ENCODE measurements at regions of chr1 and their contacts with region 1.

Region 1: DNA sequence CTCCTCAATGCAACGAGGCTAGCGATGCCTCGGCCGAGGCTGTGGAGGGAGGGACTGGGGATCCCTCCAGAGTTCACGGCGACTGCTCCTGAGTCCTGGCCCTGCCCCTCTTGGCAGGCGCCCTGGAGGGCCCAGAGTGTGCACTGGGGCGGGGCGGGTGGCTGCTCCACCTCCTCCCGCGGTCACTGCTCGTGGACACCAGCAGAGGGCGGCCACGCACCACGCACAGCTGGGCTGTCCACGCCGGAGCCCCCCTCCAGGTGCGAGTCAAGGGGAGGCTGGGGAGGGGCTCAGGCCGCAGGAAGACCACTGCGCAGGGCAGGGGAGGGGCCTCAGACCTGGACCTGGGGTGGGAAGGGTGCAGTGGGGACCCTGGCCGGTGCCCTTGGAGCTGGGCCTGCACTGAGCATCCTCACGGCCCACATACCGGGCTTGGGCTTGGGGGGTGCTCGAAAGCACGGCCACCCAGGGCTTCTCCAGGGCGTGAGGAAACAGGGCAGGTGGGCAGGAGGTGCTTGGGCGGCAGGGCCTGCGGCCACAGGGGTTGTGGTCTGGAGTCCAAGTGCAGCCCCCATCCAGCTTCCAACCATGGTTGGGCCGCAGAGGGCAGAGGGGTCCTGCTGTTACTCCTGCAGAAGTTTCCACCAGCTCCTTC is 20.6 kb upstream of the TTC34 start:
- DNase-seq: peak; percentile 22
- H3K4me3 ChIP-seq: no peak overlapping the region
- H3K27ac ChIP-seq: no peak overlapping the region
- H3K4me1 ChIP-seq: no peaks in the 10 kb centered on the region
- H3K27me3 ChIP-seq: no peaks in the 10 kb centered on the region
- CTCF ChIP-seq: peak; percentile 66

Region 2: DNA sequence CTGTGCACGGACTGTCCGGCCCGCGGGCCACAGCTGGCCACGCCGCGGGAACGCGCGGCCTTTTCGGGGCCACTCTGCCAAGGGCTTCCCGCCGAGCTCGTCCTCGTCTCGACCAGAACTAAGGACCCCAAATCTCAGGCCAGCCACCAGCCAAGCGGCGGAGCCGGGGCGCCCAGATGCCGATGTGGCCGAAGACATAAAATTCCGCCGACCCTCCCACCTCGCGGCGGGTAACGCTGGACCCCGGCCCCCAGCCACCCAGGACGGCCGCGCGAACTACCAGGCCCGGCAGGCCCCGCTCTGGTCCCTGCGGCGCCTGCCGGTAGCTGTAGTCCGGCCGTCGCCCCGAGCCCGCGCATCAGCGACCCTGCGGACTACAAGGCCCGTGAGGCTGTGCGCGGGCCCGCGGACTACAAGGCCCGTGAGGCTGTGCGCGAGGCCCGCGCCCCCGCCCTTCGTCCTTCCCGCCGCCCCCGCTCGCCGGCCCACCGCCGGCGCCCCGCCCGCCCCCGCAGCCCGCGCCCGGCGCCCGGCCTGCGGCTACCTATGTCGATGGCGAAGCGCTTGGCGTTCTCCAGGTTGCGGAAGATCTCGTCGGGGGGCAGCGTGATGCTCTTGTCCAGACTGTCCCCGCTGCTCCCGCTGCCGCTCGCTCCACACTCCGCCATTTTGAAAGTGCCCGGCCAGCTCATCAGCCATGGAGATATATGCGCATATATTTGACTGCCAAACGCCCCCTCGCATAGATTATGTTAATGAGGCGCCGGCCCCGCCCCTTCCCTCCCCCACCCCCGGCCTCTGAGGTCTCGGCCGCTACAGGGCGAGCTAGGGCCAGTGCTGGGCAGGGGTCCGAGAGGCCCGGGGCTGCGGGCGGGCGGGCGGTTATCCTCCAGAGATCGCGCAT is 295.9 kb before region 1 on chr1 and contains the start of gene PANK4:
- intact Hi-C with region 1: no loop called
- DNase-seq: peak; percentile 93
- H3K4me3 ChIP-seq: peak within 1 kb of the TSS; percentile 98
- H3K27ac ChIP-seq: peak within 1 kb of the TSS; percentile 44
- H3K4me1 ChIP-seq: peaks cover 11% of the 10 kb centered on the region
- H3K27me3 ChIP-seq: peaks cover 15% of the 10 kb centered on the region
- CTCF ChIP-seq: no peak
- total RNA-seq, gene PANK4: 27.0 to 42.0 TPM

Region 3: DNA sequence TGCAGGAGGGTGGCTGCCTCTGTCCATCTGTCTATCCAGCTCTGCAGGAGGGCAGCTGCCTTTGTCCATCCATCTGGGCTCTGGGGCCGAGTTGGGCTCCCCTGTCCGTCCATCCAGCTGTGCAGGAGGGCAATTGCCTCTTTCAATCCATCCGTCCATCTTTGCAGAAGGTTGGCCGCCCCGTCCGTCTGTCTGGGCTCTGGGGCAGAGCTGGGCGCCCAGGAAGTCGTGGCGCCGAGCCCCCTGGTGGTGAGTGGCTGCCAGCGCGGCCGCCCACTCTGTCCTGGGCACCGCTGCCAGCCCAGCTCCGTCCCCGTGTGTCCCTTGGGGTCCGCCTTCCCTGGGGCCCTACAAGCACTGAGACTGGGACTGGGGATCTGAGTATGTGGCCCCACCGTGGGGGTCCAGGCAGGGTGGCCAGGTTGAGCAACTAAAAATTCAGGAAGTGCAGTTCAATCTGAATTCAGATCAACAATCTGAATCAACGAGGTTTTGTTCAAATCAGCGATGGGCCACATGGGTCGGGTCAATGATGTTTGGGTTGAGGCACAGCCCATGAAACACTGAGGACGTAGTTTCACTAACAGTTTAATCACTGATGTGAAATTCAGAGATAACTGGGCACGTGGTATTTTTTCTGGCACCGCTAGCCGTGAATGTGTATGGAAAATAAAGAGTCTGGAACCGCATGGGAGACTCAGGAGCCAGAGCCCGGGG is 100.0 kb after region 1 on chr1:
- intact Hi-C with region 1: loop called (anchors 5 kb)
- DNase-seq: peak; percentile 22
- H3K4me3 ChIP-seq: no peak overlapping the region
- H3K27ac ChIP-seq: no peak overlapping the region
- H3K4me1 ChIP-seq: no peaks in the 10 kb centered on the region
- H3K27me3 ChIP-seq: no peaks in the 10 kb centered on the region
- CTCF ChIP-seq: peak; percentile 74

Region 4: DNA sequence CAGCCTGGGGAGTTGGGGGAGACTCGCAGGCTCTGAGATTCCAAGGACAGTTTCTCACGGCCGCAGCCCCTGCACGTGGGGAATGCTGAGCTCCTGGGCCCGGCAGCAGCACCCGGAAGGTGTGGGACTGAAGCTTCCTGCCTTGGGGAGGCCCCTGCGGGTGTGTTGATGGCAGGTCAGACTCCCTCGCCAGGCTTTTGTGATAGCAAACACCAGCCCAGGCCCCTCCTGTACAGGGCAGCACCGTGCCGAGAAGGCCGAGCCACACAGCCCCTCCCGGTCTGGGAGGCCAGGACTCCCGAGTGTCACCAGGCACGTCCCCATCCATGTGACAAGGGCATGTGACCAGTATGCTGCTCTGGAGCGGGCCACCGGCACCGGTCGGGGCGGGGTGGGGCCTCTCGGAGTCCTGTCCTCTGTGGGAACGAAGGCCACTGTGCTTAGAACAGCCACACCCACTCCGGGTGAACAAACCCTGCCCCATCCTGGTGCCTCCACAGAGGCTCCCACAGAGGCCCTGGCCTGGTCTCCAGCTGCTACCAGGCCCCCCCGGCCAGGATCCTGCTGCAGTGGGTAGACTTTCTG is 601.2 kb after region 1 on chr1:
- intact Hi-C with region 1: loop called (anchors 10 kb)
- DNase-seq: peak; percentile 90
- H3K4me3 ChIP-seq: no peak overlapping the region
- H3K27ac ChIP-seq: peak overlapping the region; percentile 50
- H3K4me1 ChIP-seq: peaks cover 18% of the 10 kb centered on the region
- H3K27me3 ChIP-seq: no peaks in the 10 kb centered on the region
- CTCF ChIP-seq: no peak